ENCODE measurements at regions of chr17 and their contacts with region 1.

Region 1: GRCh38 chr17:41966463-41967140 is at the start of gene CNP:
- DNase-seq: peak; percentile 95
- ATAC-seq: peak; percentile 75
- H3K4me3 Mint-ChIP-seq: peak within 1 kb of the TSS; percentile 79
- H3K27ac Mint-ChIP-seq: peak within 1 kb of the TSS; percentile 82
- H3K4me1 Mint-ChIP-seq: peaks cover 36% of the 10 kb centered on the region
- H3K27me3 Mint-ChIP-seq: no peaks in the 10 kb centered on the region
- total RNA-seq, gene CNP: 55.1 to 77.0 TPM

Region 2: GRCh38 chr17:41844971-41845370 is 121.6 kb before region 1 on chr17:
- CTCF ChIA-PET with region 1: no interaction called
- POLR2A ChIA-PET with region 1: no interaction called
- intact Hi-C with region 1: no loop called
- DNase-seq: no peak
- ATAC-seq: no peak
- H3K4me3 Mint-ChIP-seq: no peak overlapping the region
- H3K27ac Mint-ChIP-seq: no peak overlapping the region
- H3K4me1 Mint-ChIP-seq: peaks cover 3% of the 10 kb centered on the region
- H3K27me3 Mint-ChIP-seq: no peaks in the 10 kb centered on the region

Region 3: GRCh38 chr17:41864836-41865595 is 101.6 kb before region 1 on chr17 and contains the start of gene KLHL11:
- CTCF ChIA-PET with region 1: interaction called, 4 read pairs
- POLR2A ChIA-PET with region 1: interaction called, 5 read pairs
- intact Hi-C with region 1: loop called in 1 of 2 experiments (anchors 1 kb)
- DNase-seq: peak; percentile 94
- ATAC-seq: peak; percentile 88
- H3K4me3 Mint-ChIP-seq: no peak within 1 kb of the TSS
- H3K27ac Mint-ChIP-seq: peak within 1 kb of the TSS; percentile 68
- H3K4me1 Mint-ChIP-seq: peaks cover 49% of the 10 kb centered on the region
- H3K27me3 Mint-ChIP-seq: no peaks in the 10 kb centered on the region
- total RNA-seq, gene KLHL11: 16.4 to 18.0 TPM

Region 4: DNA sequence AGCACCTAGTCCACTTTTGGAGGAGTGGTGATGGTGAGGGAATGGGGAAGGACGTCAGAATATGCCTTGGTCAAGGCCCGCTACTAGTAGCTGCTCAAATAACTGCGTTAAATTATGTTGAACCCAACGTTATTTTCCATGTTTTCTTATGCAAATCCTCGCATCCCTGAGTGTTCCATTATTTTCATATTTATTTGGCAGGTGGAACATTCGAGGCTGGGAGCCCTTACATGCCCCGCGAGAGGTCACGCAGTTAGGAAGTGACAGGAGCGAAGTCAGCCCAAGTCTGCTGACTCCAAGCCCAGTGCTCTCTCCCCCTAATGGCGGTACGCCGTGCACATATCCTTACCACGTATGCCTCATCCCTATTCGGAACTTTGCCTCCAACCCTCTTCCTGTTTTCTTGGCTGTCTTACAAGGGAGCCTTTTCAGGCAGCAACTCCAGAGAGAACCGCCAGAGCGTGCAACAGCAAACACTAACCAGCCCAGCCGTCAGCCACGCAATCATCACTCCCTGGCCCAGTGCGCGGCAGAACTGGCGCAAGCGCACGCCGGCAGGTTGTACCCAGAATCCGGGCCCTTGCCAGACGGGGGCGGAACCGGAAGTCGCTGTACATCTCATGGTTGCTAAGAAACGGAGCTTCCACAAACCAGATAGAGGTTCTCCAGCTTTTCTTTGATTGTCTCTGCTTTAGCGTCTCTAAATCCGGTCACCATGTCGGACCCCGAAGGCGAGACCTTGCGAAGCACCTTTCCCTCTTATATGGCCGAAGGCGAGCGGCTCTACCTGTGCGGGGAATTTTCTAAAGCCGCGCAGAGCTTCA is 36.4 kb before region 1 on chr17 and contains the start of gene ODAD4:
- CTCF ChIA-PET with region 1: interaction called, 9 read pairs
- POLR2A ChIA-PET with region 1: interaction called, 4 read pairs
- intact Hi-C with region 1: loop called (anchors 1 to 5 kb)
- DNase-seq: peak; percentile 98
- ATAC-seq: peak; percentile 99
- H3K4me3 Mint-ChIP-seq: peak within 1 kb of the TSS; percentile 96
- H3K27ac Mint-ChIP-seq: peak within 1 kb of the TSS; percentile 98
- H3K4me1 Mint-ChIP-seq: peaks cover 21% of the 10 kb centered on the region
- H3K27me3 Mint-ChIP-seq: no peaks in the 10 kb centered on the region
- total RNA-seq, gene ODAD4: 0.81 to 1.1 TPM

Region 5: GRCh38 chr17:42101513-42102319 is 135.1 kb after region 1 on chr17:
- CTCF ChIA-PET with region 1: interaction called, 10 read pairs
- POLR2A ChIA-PET with region 1: no interaction called
- intact Hi-C with region 1: loop called in 1 of 2 experiments (anchors 1 kb)
- DNase-seq: peak; percentile 88
- ATAC-seq: peak; percentile 73
- H3K4me3 Mint-ChIP-seq: no peak overlapping the region
- H3K27ac Mint-ChIP-seq: no peak overlapping the region
- H3K4me1 Mint-ChIP-seq: peaks cover 8% of the 10 kb centered on the region
- H3K27me3 Mint-ChIP-seq: peaks cover 12% of the 10 kb centered on the region

Region 6: DNA sequence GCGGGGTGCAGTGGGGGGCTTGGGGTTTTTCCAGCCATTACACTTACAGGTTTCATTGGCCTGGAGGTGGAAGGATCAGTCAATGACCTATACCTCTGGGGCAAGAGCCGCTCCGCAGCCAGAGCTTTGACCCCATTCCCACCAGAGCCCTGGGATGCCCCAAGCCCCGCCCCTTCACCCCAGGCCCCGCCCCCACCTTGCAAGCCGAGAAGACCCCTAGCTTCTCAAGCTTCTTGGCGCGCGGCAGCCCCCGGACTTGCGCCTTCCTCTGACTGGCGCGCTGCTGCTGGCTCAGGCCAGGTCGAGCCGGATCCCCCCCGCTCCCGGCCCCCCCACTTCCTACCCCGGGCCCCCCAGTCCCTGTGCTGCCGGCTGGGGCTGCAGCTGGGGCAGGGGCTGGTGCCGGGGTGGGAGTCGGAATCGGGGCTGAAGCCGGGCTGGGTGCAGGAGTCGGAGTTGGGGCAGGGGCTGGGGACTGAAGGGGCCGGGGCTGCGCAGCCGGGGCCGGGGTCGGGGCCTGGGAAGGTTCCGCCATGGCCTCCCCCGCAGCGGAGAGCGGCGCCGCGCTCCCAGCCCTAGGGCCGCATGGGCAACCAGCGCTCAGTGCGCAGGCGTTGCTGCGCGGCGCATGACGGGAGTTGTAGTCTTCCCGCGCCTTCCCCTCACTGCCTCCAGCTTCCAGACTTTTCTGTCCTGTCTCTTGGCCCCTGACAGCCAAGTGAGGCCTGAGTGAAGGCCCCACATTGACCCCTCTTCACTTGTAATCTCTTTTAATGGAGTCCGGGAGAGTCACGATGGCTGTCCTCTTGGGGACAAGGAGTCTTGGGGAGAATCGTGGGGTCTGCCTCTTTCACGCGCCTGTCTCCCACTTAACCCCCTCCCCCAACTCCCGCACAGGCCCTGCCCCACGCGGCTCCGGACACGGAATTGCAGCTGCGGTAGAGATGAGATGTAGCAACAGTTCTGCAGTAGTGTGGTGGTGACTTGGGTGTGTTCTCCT is 154.5 kb after region 1 on chr17 and contains the start of gene KAT2A:
- CTCF ChIA-PET with region 1: interaction called, 5 read pairs
- POLR2A ChIA-PET with region 1: interaction called, 3 read pairs
- intact Hi-C with region 1: loop called (anchors 1 to 2 kb)
- DNase-seq: peak; percentile 90
- ATAC-seq: peak; percentile 93
- H3K4me3 Mint-ChIP-seq: peak within 1 kb of the TSS; percentile 70
- H3K27ac Mint-ChIP-seq: peak within 1 kb of the TSS; percentile 76
- H3K4me1 Mint-ChIP-seq: peaks cover 29% of the 10 kb centered on the region
- H3K27me3 Mint-ChIP-seq: no peaks in the 10 kb centered on the region
- total RNA-seq, gene KAT2A: 46.2 to 54.8 TPM

Region 7: GRCh38 chr17:42153919-42154742 is 187.5 kb after region 1 on chr17:
- CTCF ChIA-PET with region 1: no interaction called
- POLR2A ChIA-PET with region 1: no interaction called
- intact Hi-C with region 1: loop called in 1 of 2 experiments (anchors 1 kb)
- DNase-seq: no peak
- ATAC-seq: no peak
- H3K4me3 Mint-ChIP-seq: peak overlapping the region; percentile 97
- H3K27ac Mint-ChIP-seq: peak overlapping the region; percentile 93
- H3K4me1 Mint-ChIP-seq: peaks cover 31% of the 10 kb centered on the region
- H3K27me3 Mint-ChIP-seq: no peaks in the 10 kb centered on the region

Region 8: GRCh38 chr17:42609182-42609813 is 642.7 kb after region 1 on chr17 and contains the starts of genes RETREG3 and TUBG1:
- CTCF ChIA-PET with region 1: no interaction called
- POLR2A ChIA-PET with region 1: no interaction called
- intact Hi-C with region 1: loop called in 1 of 2 experiments (anchors 1 kb)
- DNase-seq: peak; percentile 100
- ATAC-seq: peak; percentile 92
- H3K4me3 Mint-ChIP-seq: peak within 1 kb of the TSS; percentile 95
- H3K27ac Mint-ChIP-seq: peak within 1 kb of the TSS; percentile 97
- H3K4me1 Mint-ChIP-seq: peaks cover 35% of the 10 kb centered on the region
- H3K27me3 Mint-ChIP-seq: no peaks in the 10 kb centered on the region
- total RNA-seq, gene RETREG3: 28.3 to 30.9 TPM
- total RNA-seq, gene TUBG1: 76.1 to 102 TPM